ENCODE measurements at regions of chrX and their contacts with region 1.

Region 1: GRCh38 chrX:154840856-154841255 is 6.4 kb upstream of the SMIM9 start:
- DNase-seq: no peak
- H3K4me3 ChIP-seq: no peak overlapping the region
- H3K27ac ChIP-seq: no peak overlapping the region
- H3K4me1 ChIP-seq: no peaks in the 10 kb centered on the region
- H3K27me3 ChIP-seq: no peaks in the 10 kb centered on the region
- CTCF ChIP-seq: peak; percentile 20 to 54 (median 43)
- EP300 ChIP-seq: no peak
- POLR2A ChIP-seq: no peak

Region 2: DNA sequence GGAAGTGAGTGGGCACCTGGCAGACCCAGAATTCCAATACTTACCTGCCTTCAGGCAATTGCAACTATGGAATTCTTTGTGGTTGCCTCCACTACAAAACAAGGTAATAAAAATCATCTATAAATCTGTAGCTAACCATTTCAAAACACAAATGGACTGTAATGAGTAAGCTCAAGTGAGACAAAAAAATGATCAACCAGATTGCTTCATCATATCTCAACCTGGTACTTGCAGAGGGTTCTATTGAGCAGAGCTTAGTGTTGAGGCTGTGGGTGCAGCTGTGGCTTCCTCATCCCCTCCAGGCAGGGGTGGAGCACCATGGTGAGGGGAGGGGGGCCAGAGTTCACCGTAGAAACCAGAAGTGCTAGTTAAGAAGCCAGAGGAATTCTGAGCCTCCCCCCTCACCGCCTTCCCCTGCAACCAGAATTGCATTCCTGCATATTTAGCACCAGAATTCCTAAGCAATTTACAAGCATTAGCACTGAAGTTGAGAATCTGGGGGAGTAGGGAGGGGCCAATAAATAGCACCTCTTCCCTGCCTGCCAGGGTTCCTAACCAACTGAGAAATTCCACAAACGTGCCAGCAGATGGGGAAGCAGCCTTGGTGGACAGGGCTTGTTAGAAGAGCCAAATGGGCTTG is 244.4 kb before region 1 on chrX:
- in situ Hi-C with region 1: loop called in 2 of 4 experiments (anchors 25 kb)
- intact Hi-C with region 1: no loop called
- DNase-seq: no peak
- H3K4me3 ChIP-seq: no peak overlapping the region
- H3K27ac ChIP-seq: no peak overlapping the region
- H3K4me1 ChIP-seq: no peaks in the 10 kb centered on the region
- H3K27me3 ChIP-seq: no peaks in the 10 kb centered on the region
- CTCF ChIP-seq: no peak
- EP300 ChIP-seq: no peak
- POLR2A ChIP-seq: no peak

Region 3: DNA sequence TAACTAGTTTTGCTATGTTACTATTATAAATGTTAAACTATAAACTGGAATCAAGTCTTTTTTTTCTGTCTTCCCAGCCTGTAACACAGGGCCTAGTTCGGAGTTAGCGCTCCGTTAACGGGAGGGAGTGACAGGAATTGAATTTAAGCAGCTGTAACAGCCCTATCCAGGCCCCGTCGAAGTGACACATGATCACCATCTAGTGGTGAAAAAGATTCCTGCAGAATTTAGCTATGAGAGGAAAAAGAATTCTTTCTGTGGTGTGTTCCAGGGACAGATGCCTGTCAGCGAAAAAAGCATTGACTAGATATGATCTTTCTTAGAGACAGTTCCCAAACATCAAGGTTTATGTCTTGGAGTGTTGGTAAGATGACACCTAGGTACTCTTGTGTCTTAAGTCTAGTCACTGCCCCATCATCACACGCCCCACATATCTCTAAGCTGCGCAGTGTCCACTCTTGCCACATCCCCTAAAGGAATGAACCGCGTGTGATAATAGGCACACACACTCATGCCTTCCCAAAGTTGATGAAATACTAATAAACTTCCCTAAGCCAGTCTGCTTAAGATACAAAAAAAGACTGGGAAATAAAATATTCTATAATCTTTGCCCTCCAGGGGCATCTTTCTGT is 92.0 kb before region 1 on chrX:
- in situ Hi-C with region 1: loop called in 1 of 4 experiments (anchors 25 kb)
- intact Hi-C with region 1: no loop called
- DNase-seq: no peak
- H3K4me3 ChIP-seq: no peak overlapping the region
- H3K27ac ChIP-seq: peak overlapping the region in 3 of 4 donors; percentile 23 to 79 (median 40)
- H3K4me1 ChIP-seq: peaks cover 0 to 8% (median 0%) of the 10 kb centered on the region in 4 donors
- H3K27me3 ChIP-seq: no peaks in the 10 kb centered on the region
- CTCF ChIP-seq: peak; percentile 53 to 80 (median 60)
- EP300 ChIP-seq: no peak
- POLR2A ChIP-seq: no peak

Region 4: DNA sequence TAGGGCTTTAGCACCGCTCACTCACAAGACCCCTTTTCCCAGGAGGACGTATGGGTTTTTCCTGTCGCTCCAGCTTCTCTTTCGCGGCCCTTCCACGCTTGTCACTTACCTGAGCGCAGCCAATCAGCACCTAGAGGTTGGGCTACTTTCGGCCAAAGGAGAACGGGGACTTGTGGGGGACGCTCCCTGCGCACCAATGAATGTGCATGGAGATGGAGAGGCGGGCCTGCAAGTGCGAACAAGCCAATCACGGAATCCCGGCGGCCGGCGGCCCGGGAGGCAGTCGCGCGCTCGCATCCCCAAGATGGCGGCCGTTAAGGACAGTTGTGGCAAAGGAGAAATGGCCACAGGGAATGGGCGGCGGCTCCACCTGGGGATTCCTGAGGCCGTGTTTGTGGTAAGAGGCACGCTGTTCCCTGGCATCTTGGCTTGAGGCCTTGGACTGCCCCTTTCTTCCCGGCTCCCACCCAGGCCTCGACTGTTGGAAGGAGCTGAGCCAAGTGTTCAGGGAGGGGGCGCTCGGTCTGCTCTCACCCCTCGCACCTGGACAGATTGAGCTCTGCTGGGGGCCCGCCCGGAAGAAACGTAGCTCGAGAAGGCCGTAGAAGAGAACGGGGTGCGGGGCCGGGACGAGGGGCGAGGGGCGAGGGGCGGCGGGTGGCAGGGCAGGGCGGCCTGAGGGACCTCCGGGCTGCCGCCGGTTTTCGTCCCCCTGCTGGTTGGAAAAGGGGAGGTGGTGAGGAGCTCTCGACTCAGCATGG is 375.5 kb after region 1 on chrX and contains the start of gene VBP1:
- in situ Hi-C with region 1: no loop called
- intact Hi-C with region 1: no loop called
- DNase-seq: peak; percentile 90
- H3K4me3 ChIP-seq: peak within 1 kb of the TSS; percentile 51 to 79 (median 68)
- H3K27ac ChIP-seq: peak within 1 kb of the TSS; percentile 84 to 92 (median 90)
- H3K4me1 ChIP-seq: peaks cover 0 to 19% (median 2%) of the 10 kb centered on the region in 4 donors
- H3K27me3 ChIP-seq: no peaks in the 10 kb centered on the region
- CTCF ChIP-seq: peak; percentile 44 to 63 (median 50)
- EP300 ChIP-seq: no peak
- POLR2A ChIP-seq: no peak
- total RNA-seq, gene VBP1: 6.0 to 24.5 (median 22.3) TPM

Region 5: GRCh38 chrX:155334486-155335336 is 493.9 kb after region 1 on chrX and contains the start of gene CLIC2:
- in situ Hi-C with region 1: no loop called
- intact Hi-C with region 1: no loop called
- DNase-seq: peak; percentile 17
- H3K4me3 ChIP-seq: peak within 1 kb of the TSS in 2 of 4 donors; percentile 2 to 30
- H3K27ac ChIP-seq: peak within 1 kb of the TSS; percentile 42 to 50 (median 48)
- H3K4me1 ChIP-seq: no peaks in the 10 kb centered on the region
- H3K27me3 ChIP-seq: no peaks in the 10 kb centered on the region
- CTCF ChIP-seq: no peak
- EP300 ChIP-seq: no peak
- POLR2A ChIP-seq: no peak
- total RNA-seq, gene CLIC2: 0.20 to 7.8 (median 2.1) TPM

Measured in transverse colon (tissue), 4 donors.